ENCODE measurements at regions of chrX and their contacts with region 1.

Region 1: DNA sequence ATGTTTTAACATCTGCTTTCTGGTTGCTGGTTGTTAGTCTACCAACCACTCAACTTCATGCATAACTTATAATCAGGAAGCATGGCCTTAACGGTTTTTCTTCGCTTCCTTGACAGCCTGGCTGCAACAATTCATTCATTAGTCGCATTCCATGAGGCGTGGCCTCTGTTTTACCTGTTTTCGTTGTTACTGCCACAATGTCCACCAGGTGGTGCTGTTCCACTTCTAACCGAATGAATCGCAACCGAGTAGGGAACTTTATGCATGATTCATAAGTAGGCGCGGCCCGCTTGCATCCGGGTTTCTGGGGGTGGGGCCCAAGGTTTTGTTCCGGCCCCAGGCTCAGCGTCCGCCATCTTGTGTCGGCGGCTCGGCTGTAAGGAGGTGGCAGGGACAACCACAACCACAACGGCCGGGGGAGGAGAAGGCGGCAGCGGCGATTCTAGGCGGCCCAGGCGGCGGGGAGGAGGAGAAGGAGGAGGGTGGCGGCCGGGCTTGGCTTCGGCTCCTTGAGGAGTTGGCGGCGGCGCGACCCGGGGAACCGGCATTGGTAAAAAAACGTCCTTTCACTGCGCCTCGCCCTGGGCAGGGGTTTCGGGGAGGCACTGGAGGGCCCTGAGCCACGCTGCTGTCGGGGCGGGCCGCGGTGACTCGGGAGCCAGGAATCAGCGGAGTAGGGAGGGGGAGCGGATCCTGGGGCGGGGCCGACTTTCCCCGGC is at the start of gene UBA1:
- DNase-seq: peak; percentile 87
- ATAC-seq: peak; percentile 70
- H3K4me3 ChIP-seq: peak within 1 kb of the TSS; percentile 75 to 77
- H3K27ac ChIP-seq: peak within 1 kb of the TSS; percentile 83
- H3K4me1 ChIP-seq: peaks cover 7 to 26% of the 10 kb centered on the region in 2 experiments; a peak in 3 of 4 replicates
- H3K27me3 ChIP-seq: no peaks in the 10 kb centered on the region
- CTCF ChIP-seq: peak in 2 of 3 experiments; percentile 51 to 61; a peak in 3 of 6 replicates
- POLR2A ChIP-seq: peak; percentile 62
- RAD21 ChIP-seq: no peak
- total RNA-seq, gene UBA1: 275 TPM

Region 2: GRCh38 chrX:46611658-46612362 is 581.8 kb before region 1 on chrX:
- CTCF ChIA-PET with region 1: no interaction called
- POLR2A ChIA-PET with region 1: no interaction called
- RAD21 ChIA-PET with region 1: no interaction called
- intact Hi-C with region 1: no loop called
- DNase-seq: no peak
- ATAC-seq: no peak
- H3K4me3 ChIP-seq: no peak overlapping the region
- H3K27ac ChIP-seq: no peak overlapping the region
- H3K4me1 ChIP-seq: no peaks in the 10 kb centered on the region
- H3K27me3 ChIP-seq: no peaks in the 10 kb centered on the region
- CTCF ChIP-seq: no peak
- POLR2A ChIP-seq: no peak
- RAD21 ChIP-seq: no peak

Region 3: DNA sequence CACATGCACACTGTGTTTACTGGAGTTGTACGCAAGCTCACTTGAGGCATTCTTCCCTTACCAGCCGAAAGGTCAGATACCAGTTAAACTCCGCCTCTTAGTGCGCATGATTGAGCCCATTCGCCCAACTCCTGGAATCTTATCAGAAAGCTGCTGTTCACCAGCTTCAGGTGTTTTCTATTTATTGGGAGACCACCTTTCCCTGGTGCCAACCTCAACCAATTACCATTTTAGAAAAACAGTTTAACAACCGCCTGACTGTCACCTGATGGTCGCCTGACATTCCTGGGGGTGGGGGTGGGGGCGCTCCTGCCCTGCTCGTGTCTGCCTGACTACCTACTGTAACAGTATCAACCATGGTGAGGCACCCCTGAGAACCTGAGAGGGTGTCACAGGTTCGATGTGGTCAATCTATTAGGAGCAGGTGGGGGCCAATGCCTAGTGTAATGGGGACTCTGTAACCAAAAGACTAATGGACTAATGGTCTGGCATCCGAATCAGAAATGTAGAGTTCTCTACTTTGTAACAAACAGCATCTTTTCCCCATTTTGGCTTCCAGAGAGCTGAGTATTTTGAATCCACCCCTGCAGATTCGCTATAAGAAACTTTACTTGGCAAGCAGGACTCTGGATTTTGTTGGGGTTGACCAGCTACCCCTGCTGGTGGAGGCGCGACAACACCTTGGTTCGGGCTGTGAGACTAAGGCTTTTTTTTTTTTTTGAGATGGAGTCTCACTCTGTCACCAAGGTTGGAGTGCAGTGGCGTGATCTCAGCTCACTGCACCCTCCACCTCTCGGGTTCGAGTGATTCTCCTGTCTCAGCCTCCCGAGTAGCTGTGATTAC is 118.5 kb after region 1 on chrX:
- CTCF ChIA-PET with region 1: no interaction called
- POLR2A ChIA-PET with region 1: no interaction called
- RAD21 ChIA-PET with region 1: no interaction called
- intact Hi-C with region 1: loop called (anchors 1 kb)
- DNase-seq: peak; percentile 35
- ATAC-seq: peak; percentile 79
- H3K4me3 ChIP-seq: no peak overlapping the region
- H3K27ac ChIP-seq: no peak overlapping the region
- H3K4me1 ChIP-seq: peaks cover 0 to 4% of the 10 kb centered on the region in 2 experiments; a peak in 2 of 4 replicates
- H3K27me3 ChIP-seq: no peaks in the 10 kb centered on the region
- CTCF ChIP-seq: peak; percentile 22 to 56 (median 53); a peak in 5 of 6 replicates
- POLR2A ChIP-seq: no peak
- RAD21 ChIP-seq: peak; percentile 60

Region 4: GRCh38 chrX:47384502-47384901 is 190.9 kb after region 1 on chrX:
- CTCF ChIA-PET with region 1: interaction called, 11 read pairs
- POLR2A ChIA-PET with region 1: no interaction called
- RAD21 ChIA-PET with region 1: interaction called in 1 of 2 experiments, 7 read pairs
- intact Hi-C with region 1: loop called (anchors 1 kb)
- DNase-seq: peak; percentile 61
- ATAC-seq: peak; percentile 90
- H3K4me3 ChIP-seq: no peak overlapping the region
- H3K27ac ChIP-seq: no peak overlapping the region
- H3K4me1 ChIP-seq: peaks cover 0 to 6% of the 10 kb centered on the region in 2 experiments; a peak in 2 of 4 replicates
- H3K27me3 ChIP-seq: no peaks in the 10 kb centered on the region
- CTCF ChIP-seq: peak; percentile 61 to 71 (median 71); a peak in 5 of 6 replicates
- POLR2A ChIP-seq: no peak
- RAD21 ChIP-seq: peak; percentile 82

Region 5: GRCh38 chrX:47523297-47523696 is 329.7 kb after region 1 on chrX:
- CTCF ChIA-PET with region 1: interaction called, 4 read pairs
- POLR2A ChIA-PET with region 1: interaction called, 7 read pairs
- RAD21 ChIA-PET with region 1: interaction called in 1 of 2 experiments, 5 read pairs
- intact Hi-C with region 1: loop called (anchors 1 kb)
- DNase-seq: peak; percentile 38
- ATAC-seq: peak; percentile 99
- H3K4me3 ChIP-seq: peak overlapping the region; percentile 2 to 20; a peak in 1 of 4 replicates
- H3K27ac ChIP-seq: no peak overlapping the region
- H3K4me1 ChIP-seq: peaks cover 0 to 6% of the 10 kb centered on the region in 2 experiments; a peak in 1 of 4 replicates
- H3K27me3 ChIP-seq: no peaks in the 10 kb centered on the region
- CTCF ChIP-seq: peak; percentile 41 to 62 (median 59); a peak in 5 of 6 replicates
- POLR2A ChIP-seq: no peak
- RAD21 ChIP-seq: peak; percentile 89

Region 6: DNA sequence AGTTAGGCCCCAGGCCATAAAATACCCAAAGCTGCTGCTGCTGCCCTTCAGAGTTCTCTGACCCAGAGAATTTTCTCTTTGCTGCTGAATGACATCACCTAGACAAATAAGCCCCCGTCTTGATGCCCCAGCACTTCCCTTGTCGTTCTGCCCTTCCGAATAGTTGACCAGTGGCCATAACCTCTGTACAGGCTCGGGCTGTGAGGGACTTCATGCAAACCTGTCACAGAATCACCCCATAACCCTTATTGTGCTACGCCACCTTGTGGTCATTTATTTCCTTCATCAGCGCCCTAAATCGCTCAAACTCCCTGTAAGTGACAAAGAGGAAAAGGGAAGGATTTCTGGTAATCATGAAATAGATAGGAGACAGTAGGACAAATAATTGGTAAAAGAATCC is 831.9 kb after region 1 on chrX:
- CTCF ChIA-PET with region 1: no interaction called
- POLR2A ChIA-PET with region 1: no interaction called
- RAD21 ChIA-PET with region 1: no interaction called
- intact Hi-C with region 1: loop called (anchors 5 kb)
- DNase-seq: peak; percentile 64
- ATAC-seq: peak; percentile 77
- H3K4me3 ChIP-seq: no peak overlapping the region
- H3K27ac ChIP-seq: no peak overlapping the region
- H3K4me1 ChIP-seq: no peaks in the 10 kb centered on the region
- H3K27me3 ChIP-seq: no peaks in the 10 kb centered on the region
- CTCF ChIP-seq: peak; percentile 43 to 65 (median 64); a peak in 5 of 6 replicates
- POLR2A ChIP-seq: no peak
- RAD21 ChIP-seq: peak; percentile 78